ENCODE measurements at regions of chr9 and their contacts with region 1.

Region 1: GRCh38 chr9:89000973-89001916 is 10.0 kb downstream of the S1PR3 start:
- DNase-seq: peak; percentile 86
- H3K4me3 ChIP-seq: no peak overlapping the region
- H3K27ac ChIP-seq: peak overlapping the region; percentile 6 to 52 (median 38)
- H3K4me1 ChIP-seq: peaks cover 7 to 24% (median 11%) of the 10 kb centered on the region in 4 donors
- H3K27me3 ChIP-seq: no peaks in the 10 kb centered on the region
- CTCF ChIP-seq: peak; percentile 67 to 79 (median 74)
- EP300 ChIP-seq: no peak
- POLR2A ChIP-seq: no peak

Region 2: GRCh38 chr9:88076286-88077090 is 924.8 kb before region 1 on chr9:
- in situ Hi-C with region 1: loop called in 1 of 4 experiments (anchors 25 kb)
- intact Hi-C with region 1: no loop called
- DNase-seq: peak; percentile 91
- H3K4me3 ChIP-seq: peak overlapping the region; percentile 33 to 75 (median 46)
- H3K27ac ChIP-seq: peak overlapping the region; percentile 89 to 92 (median 91)
- H3K4me1 ChIP-seq: peaks cover 0 to 21% (median 10%) of the 10 kb centered on the region in 4 donors
- H3K27me3 ChIP-seq: no peaks in the 10 kb centered on the region
- CTCF ChIP-seq: peak in 4 of 5 experiments; percentile 24 to 44 (median 32)
- EP300 ChIP-seq: no peak
- POLR2A ChIP-seq: peak; percentile 62

Region 3: DNA sequence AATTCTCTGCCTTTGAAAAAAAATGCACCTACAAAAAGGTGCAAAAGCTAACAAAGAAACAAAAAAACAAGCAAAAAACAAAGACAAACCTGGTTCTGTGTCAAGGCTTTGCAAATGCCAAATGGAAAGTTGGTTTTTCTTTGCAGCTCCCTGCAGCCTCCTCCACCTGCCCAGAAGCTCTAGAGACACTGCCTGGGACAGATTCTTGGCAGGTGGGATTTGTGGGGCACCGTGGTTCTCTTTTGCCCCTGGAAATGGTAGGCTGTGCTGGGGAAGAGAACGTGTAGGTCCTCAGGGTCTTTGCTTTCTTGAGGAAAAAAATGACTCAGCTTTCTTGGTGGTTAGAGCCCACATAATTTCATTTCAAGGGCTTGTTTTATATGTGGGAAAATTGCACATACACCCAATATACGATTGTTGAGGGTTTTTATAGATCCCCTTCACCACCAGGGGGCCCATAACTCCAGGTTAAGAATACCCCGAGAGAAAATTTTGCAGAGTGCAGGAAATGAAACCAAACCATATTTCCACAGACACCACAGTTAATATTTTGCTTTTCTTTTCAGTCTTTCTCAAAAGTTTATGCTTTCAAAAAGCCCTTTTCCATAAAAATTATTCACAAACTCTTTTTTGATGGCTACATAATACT is 407.6 kb before region 1 on chr9:
- in situ Hi-C with region 1: loop called (anchors 5 to 10 kb)
- intact Hi-C with region 1: loop called (anchors 2 kb)
- DNase-seq: peak; percentile 37
- H3K4me3 ChIP-seq: no peak overlapping the region
- H3K27ac ChIP-seq: no peak overlapping the region
- H3K4me1 ChIP-seq: no peaks in the 10 kb centered on the region
- H3K27me3 ChIP-seq: no peaks in the 10 kb centered on the region
- CTCF ChIP-seq: peak; percentile 52 to 72 (median 66)
- EP300 ChIP-seq: no peak
- POLR2A ChIP-seq: no peak

Measured in transverse colon (tissue), 4 donors.